Posterior vena cava (tissue), 2 donors: ENCODE measurements at regions of chr3 and their contacts with region 1.

Region 1: DNA sequence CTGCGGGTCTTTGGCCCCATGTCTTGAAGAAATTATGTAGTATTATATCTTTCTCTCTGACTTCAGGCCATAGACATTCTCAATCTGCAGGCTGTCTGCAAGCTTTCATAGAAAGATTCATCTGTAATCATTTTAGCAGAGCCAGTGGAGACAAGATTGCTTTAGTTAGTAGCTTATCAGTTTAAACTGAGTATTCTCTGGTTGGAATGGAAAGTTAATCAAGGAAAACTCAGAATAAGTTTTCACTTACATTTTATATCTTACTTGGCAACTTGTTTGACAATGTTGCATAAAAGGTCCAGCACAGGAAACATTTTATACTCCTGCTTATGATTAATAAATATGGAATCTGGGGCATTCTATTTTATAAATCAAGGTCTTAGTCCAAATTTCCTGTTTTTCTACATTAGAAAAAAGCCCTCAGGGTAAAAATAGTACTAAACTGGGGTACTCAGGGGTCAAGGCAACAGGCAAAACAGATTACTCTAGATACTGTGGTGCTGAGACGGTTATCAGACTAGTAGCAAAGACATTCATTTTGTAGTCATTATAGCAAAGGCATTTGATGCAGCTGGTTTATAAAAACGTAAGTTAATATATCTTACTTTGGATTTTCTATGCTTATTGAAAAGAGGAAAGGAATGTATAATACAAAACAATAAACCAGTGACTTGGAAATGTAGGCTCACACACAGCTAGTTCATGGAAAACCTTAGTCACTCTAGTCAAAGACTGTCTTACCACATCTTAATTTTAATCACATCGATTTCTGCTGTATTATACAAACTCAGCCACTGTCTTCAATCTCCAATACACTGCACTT is 45.2 kb upstream of the FILIP1L start:
- DNase-seq: no peak

Region 2: GRCh38 chr3:99965077-99965476 is 194.5 kb before region 1 on chr3:
- intact Hi-C with region 1: loop called in 1 of 2 experiments (anchors 10 kb)
- DNase-seq: no peak

Region 3: GRCh38 chr3:100073899-100074307 is 85.6 kb before region 1 on chr3:
- intact Hi-C with region 1: loop called in 1 of 2 experiments (anchors 10 kb)
- DNase-seq: no peak

Region 4: DNA sequence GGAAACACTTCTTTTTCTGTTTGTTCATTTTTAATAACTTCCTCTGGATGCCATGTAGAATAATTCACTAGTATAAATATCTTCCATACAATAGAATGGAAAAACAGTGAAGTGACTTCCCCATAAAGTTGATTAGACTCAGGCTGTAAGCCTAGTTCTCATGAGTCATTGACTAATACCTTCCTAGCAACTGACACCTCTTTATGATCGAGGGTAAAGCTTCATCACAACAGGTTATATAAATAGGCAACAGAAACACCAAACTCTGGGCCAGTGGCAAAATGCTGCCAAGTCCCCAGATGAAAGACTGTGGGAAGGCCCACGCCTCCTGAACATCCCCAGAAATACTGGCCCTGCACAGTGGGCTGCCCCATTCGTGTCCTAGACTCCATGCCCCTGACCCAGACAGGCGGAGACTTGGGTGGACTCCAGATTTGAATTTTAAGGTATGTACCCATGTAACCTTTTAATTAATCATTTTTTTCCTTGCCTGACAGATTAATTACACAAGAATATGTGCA is 30.0 kb after region 1 on chr3:
- intact Hi-C with region 1: no loop called
- DNase-seq: no peak

Region 5: GRCh38 chr3:100210772-100211135 is 51.2 kb after region 1 on chr3:
- intact Hi-C with region 1: loop called in 1 of 2 experiments (anchors 10 kb)
- DNase-seq: no peak

Region 6: DNA sequence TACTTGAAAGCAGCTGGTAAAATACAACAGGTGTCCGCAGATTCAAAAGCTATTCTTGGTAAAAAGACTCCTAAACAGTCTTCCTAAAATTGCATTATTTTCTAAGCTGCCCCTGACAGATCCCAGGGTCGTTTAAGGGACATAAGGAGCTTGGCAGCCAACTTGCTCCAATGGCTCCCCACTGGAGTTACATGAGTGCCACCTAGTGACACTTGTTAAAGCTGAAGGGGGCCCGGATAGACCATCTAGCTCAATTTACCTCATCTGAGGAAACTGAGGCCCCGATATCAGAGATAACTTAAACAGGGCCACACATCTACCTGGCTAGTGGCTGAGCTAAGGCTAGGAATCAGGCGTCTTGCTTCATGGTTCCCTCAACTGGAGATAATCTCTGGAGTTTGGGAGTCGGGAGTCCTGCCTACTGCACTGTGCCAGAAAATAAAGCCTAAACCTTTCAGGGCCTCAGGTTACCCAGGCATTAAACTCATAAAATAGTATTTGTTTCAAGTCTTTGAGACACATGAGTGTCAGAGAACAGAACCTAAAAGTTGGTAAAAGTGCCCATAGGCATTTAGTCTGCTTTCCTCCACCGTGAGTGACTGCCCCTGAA is 94.7 kb after region 1 on chr3:
- intact Hi-C with region 1: loop called in 1 of 2 experiments (anchors 10 kb)
- DNase-seq: no peak